Activated CD4-positive, alpha-beta T cell treated with anti-CD3 and anti-CD28 coated beads for 36 hours (primary cell): ENCODE measurements at regions of chr17 and their contacts with region 1.

Region 1: DNA sequence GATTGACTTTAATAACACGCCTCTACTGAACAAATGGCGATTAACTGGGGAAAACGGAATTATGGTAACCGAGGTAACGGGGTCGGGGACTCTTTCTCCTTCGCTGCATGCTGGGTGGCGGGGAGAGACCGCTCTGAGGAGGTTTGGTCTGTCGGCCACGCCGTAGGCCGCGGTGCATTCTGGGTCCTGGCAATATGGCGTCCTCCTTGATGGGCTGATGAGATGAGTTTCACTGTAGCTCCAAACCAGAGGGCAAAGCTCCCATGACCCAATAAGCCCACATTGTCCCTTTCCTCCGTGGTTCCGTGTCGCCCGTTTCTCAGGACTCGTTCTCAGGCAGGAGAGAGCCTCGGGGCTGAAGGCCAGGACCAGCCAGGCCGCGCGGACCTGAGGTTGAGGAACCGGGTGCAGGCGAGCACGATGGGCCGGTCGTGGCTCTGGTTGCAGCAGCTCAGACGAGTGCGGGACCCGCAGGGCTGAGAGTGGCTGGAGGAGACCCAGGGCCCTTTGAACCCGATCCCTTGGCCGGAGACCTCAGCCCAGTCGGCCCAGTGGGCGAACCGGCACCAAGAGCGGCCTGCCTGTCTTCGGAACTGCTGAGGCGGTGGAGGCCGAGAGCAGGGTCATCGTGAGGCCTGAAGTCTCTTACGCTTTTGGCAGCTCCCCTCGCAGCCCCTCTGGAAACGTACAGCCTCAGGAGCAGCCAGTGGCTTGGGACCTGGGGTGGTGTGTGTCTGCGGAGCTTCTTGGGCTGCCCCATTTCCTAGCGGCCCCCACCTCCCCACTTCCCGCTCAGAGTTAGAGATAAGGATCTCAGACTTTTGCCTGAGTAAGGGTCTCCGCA is at the start of gene RPTOR:
- DNase-seq: peak; percentile 95
- ATAC-seq: peak; percentile 98
- H3K4me3 Mint-ChIP-seq: peak within 1 kb of the TSS; percentile 89
- H3K27ac Mint-ChIP-seq: peak within 1 kb of the TSS; percentile 91
- H3K4me1 Mint-ChIP-seq: peaks cover 32% of the 10 kb centered on the region
- H3K27me3 Mint-ChIP-seq: peaks cover 9% of the 10 kb centered on the region
- total RNA-seq, gene RPTOR: 48.6 to 58.1 TPM

Region 2: GRCh38 chr17:80395402-80396151 is 149.3 kb before region 1 on chr17:
- CTCF ChIA-PET with region 1: no interaction called
- POLR2A ChIA-PET with region 1: no interaction called
- intact Hi-C with region 1: no loop called
- DNase-seq: no peak
- ATAC-seq: peak; percentile 45
- H3K4me3 Mint-ChIP-seq: no peak overlapping the region
- H3K27ac Mint-ChIP-seq: no peak overlapping the region
- H3K4me1 Mint-ChIP-seq: peaks cover 6% of the 10 kb centered on the region
- H3K27me3 Mint-ChIP-seq: no peaks in the 10 kb centered on the region

Region 3: GRCh38 chr17:80454557-80455335 is 90.1 kb before region 1 on chr17:
- CTCF ChIA-PET with region 1: no interaction called
- POLR2A ChIA-PET with region 1: no interaction called
- intact Hi-C with region 1: loop called in 1 of 2 experiments (anchors 1 kb)
- DNase-seq: peak; percentile 98
- ATAC-seq: peak; percentile 93
- H3K4me3 Mint-ChIP-seq: peak overlapping the region; percentile 99
- H3K27ac Mint-ChIP-seq: peak overlapping the region; percentile 94
- H3K4me1 Mint-ChIP-seq: peaks cover 23% of the 10 kb centered on the region
- H3K27me3 Mint-ChIP-seq: peaks cover 13% of the 10 kb centered on the region

Region 4: GRCh38 chr17:80855948-80856862 is 311.3 kb after region 1 on chr17:
- CTCF ChIA-PET with region 1: no interaction called
- POLR2A ChIA-PET with region 1: no interaction called
- intact Hi-C with region 1: loop called in 1 of 2 experiments (anchors 1 kb)
- DNase-seq: peak; percentile 95
- ATAC-seq: peak; percentile 98
- H3K4me3 Mint-ChIP-seq: peak overlapping the region; percentile 28
- H3K27ac Mint-ChIP-seq: peak overlapping the region; percentile 92
- H3K4me1 Mint-ChIP-seq: peaks cover 57% of the 10 kb centered on the region
- H3K27me3 Mint-ChIP-seq: no peaks in the 10 kb centered on the region

Region 5: DNA sequence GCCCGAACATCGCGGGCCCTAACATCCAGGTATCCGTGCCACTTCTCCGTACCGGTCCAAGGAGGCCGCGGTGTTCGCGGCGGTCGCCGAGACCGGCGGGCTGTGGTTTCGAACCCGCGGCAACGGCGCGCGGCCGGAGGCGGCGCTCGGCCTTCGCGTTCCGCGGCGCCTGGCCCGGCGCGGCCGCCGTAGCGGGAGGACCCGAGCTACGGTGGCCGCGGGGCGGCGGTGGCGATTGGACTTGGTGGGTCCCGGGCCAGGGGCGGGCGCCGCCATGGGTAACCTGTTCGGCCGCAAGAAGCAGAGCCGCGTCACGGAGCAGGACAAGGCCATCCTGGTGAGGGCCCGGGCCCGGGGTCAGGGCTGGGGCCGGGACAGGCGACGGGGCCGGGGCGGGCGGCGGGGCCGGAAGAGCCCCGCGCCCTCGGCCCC is 446.8 kb after region 1 on chr17 and contains the start of gene CHMP6:
- CTCF ChIA-PET with region 1: no interaction called
- POLR2A ChIA-PET with region 1: interaction called, 3 read pairs
- intact Hi-C with region 1: loop called in 1 of 2 experiments (anchors 1 kb)
- DNase-seq: peak; percentile 83
- ATAC-seq: peak; percentile 49
- H3K4me3 Mint-ChIP-seq: peak within 1 kb of the TSS; percentile 69
- H3K27ac Mint-ChIP-seq: peak within 1 kb of the TSS; percentile 74
- H3K4me1 Mint-ChIP-seq: peaks cover 21% of the 10 kb centered on the region
- H3K27me3 Mint-ChIP-seq: peaks cover 3% of the 10 kb centered on the region
- total RNA-seq, gene CHMP6: 15.9 to 19.4 TPM

Region 6: GRCh38 chr17:81115749-81116464 is 571.0 kb after region 1 on chr17:
- CTCF ChIA-PET with region 1: no interaction called
- POLR2A ChIA-PET with region 1: no interaction called
- intact Hi-C with region 1: no loop called
- DNase-seq: no peak
- ATAC-seq: no peak
- H3K4me3 Mint-ChIP-seq: no peak overlapping the region
- H3K27ac Mint-ChIP-seq: no peak overlapping the region
- H3K4me1 Mint-ChIP-seq: no peaks in the 10 kb centered on the region
- H3K27me3 Mint-ChIP-seq: no peaks in the 10 kb centered on the region